ENCODE measurements at regions of chr1 and their contacts with region 1.

Region 1: GRCh38 chr1:207822602-207823451 is 71.0 kb downstream of the CD46 start:
- DNase-seq: peak; percentile 87
- H3K4me3 Mint-ChIP-seq: peak overlapping the region; percentile 78
- H3K27ac Mint-ChIP-seq: peak overlapping the region; percentile 91
- H3K4me1 Mint-ChIP-seq: peaks cover 86% of the 10 kb centered on the region
- H3K27me3 Mint-ChIP-seq: no peaks in the 10 kb centered on the region

Region 2: GRCh38 chr1:207659545-207660183 is 163.2 kb before region 1 on chr1:
- CTCF ChIA-PET with region 1: no interaction called
- intact Hi-C with region 1: no loop called
- DNase-seq: no peak
- H3K4me3 Mint-ChIP-seq: no peak overlapping the region
- H3K27ac Mint-ChIP-seq: no peak overlapping the region
- H3K4me1 Mint-ChIP-seq: no peaks in the 10 kb centered on the region
- H3K27me3 Mint-ChIP-seq: peaks cover 7% of the 10 kb centered on the region

Region 3: GRCh38 chr1:207751790-207752455 is 70.9 kb before region 1 on chr1 and contains the start of gene CD46:
- CTCF ChIA-PET with region 1: no interaction called
- intact Hi-C with region 1: loop called (anchors 1 kb)
- DNase-seq: peak; percentile 97
- H3K4me3 Mint-ChIP-seq: peak within 1 kb of the TSS; percentile 92
- H3K27ac Mint-ChIP-seq: peak within 1 kb of the TSS; percentile 98
- H3K4me1 Mint-ChIP-seq: peaks cover 59% of the 10 kb centered on the region
- H3K27me3 Mint-ChIP-seq: no peaks in the 10 kb centered on the region
- total RNA-seq, gene CD46: 91.0 to 93.4 TPM

Region 4: GRCh38 chr1:207868774-207869721 is 46.2 kb after region 1 on chr1:
- CTCF ChIA-PET with region 1: interaction called, 342 read pairs
- intact Hi-C with region 1: loop called (anchors 1 kb)
- DNase-seq: peak; percentile 63
- H3K4me3 Mint-ChIP-seq: peak overlapping the region; percentile 92
- H3K27ac Mint-ChIP-seq: peak overlapping the region; percentile 92
- H3K4me1 Mint-ChIP-seq: peaks cover 81% of the 10 kb centered on the region
- H3K27me3 Mint-ChIP-seq: no peaks in the 10 kb centered on the region

Region 5: GRCh38 chr1:208868554-208868953 is 1045.7 kb after region 1 on chr1:
- CTCF ChIA-PET with region 1: no interaction called
- intact Hi-C with region 1: no loop called
- DNase-seq: no peak
- H3K4me3 Mint-ChIP-seq: no peak overlapping the region
- H3K27ac Mint-ChIP-seq: no peak overlapping the region
- H3K4me1 Mint-ChIP-seq: no peaks in the 10 kb centered on the region
- H3K27me3 Mint-ChIP-seq: no peaks in the 10 kb centered on the region